Panc1 (cell line): ENCODE measurements at regions of chr3 and their contacts with region 1.

Region 1: DNA sequence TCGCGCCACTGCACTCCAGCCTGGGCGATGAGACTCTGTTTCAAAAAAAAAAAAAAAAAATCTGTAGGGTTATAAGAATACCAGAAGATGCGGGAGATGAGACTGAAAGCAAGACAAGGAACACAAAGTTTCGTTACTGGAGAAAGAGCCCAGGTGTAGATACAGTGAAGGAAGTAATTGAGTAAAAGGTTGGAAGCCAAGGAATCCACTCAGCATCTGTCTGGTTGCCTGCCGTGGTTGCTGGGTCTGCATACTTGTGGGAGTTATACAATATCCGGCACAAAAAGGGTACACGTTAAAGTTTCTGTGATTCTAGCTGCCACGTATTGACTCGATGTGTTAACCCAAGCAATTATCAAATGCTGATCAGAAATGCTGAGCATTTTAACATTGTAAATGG is 63.7 kb upstream of the CBLB start:
- DNase-seq: no peak
- ATAC-seq: no peak
- H3K4me3 ChIP-seq: no peak overlapping the region
- H3K27ac ChIP-seq: no peak overlapping the region
- H3K4me1 ChIP-seq: no peaks in the 10 kb centered on the region
- H3K27me3 ChIP-seq: no peaks in the 10 kb centered on the region
- CTCF ChIP-seq: no peak

Region 2: GRCh38 chr3:105878061-105878460 is 54.4 kb before region 1 on chr3:
- CTCF ChIA-PET with region 1: no interaction called
- POLR2A ChIA-PET with region 1: interaction called, 10 read pairs
- in situ Hi-C with region 1: no loop called
- intact Hi-C with region 1: no loop called
- DNase-seq: no peak
- ATAC-seq: no peak
- H3K4me3 ChIP-seq: no peak overlapping the region
- H3K27ac ChIP-seq: no peak overlapping the region
- H3K4me1 ChIP-seq: no peaks in the 10 kb centered on the region
- H3K27me3 ChIP-seq: 0 out of 2 replicates have a peak, but pooled peaks cover 2% of the 10 kb centered on the region
- CTCF ChIP-seq: no peak

Region 3: GRCh38 chr3:106004137-106004681 is 71.7 kb after region 1 on chr3:
- CTCF ChIA-PET with region 1: no interaction called
- POLR2A ChIA-PET with region 1: no interaction called
- in situ Hi-C with region 1: no loop called
- intact Hi-C with region 1: no loop called
- DNase-seq: no peak
- ATAC-seq: no peak
- H3K4me3 ChIP-seq: no peak overlapping the region
- H3K27ac ChIP-seq: no peak overlapping the region
- H3K4me1 ChIP-seq: no peaks in the 10 kb centered on the region
- H3K27me3 ChIP-seq: no peaks in the 10 kb centered on the region
- CTCF ChIP-seq: no peak

Region 4: DNA sequence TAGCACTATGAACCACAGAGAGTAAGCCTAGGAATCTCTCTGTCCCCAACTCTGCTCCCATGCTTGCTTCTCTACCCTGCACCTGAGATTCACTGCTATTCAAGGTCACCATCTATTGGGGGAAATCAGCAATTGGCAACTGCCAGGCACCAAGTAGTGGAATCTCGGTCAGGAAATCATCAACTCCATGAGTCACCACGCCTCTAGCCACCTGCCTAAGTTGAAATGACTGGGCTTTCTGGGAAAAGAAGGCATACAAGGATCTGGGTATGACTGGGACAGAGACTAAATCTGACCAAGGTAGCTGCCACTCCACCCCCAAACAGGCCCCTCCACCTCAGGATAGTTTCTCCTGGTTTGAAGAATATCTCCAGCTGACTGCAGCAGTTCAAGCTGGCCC is 400.4 kb after region 1 on chr3:
- CTCF ChIA-PET with region 1: no interaction called
- POLR2A ChIA-PET with region 1: no interaction called
- in situ Hi-C with region 1: no loop called
- intact Hi-C with region 1: no loop called
- DNase-seq: no peak
- ATAC-seq: no peak
- H3K4me3 ChIP-seq: no peak overlapping the region
- H3K27ac ChIP-seq: no peak overlapping the region
- H3K4me1 ChIP-seq: no peaks in the 10 kb centered on the region
- H3K27me3 ChIP-seq: no peaks in the 10 kb centered on the region
- CTCF ChIP-seq: no peak